Breast epithelium (tissue), 4 donors: ENCODE measurements at regions of chr9 and their contacts with region 1.

Region 1: DNA sequence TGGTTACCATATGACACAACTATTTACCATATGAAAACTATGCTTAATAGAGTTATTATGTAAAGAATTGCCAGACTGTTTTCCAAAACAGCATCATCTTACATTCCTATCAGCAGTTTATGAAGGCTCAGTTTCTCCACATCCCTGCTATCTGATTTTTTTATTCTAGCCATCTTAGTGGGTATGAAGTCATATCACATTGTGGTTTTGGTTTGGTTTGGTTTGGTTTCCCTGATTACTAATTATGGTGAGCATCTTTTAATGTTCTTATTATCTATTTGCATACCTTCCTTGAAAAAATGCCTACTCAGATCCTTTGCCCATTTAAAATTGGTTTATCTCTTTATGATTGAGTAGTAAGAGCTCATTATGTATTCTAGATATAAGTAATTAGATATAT is 199.4 kb upstream of the NFIL3 start:
- DNase-seq: no peak
- H3K4me3 ChIP-seq: no peak overlapping the region
- H3K27ac ChIP-seq: no peak overlapping the region
- H3K4me1 ChIP-seq: no peaks in the 10 kb centered on the region
- H3K27me3 ChIP-seq: no peaks in the 10 kb centered on the region
- CTCF ChIP-seq: no peak
- POLR2A ChIP-seq: no peak

Region 2: GRCh38 chr9:91164724-91165520 is 458.1 kb before region 1 on chr9:
- intact Hi-C with region 1: loop called (anchors 5 kb)
- DNase-seq: peak; percentile 26 to 61
- H3K4me3 ChIP-seq: no peak overlapping the region
- H3K27ac ChIP-seq: no peak overlapping the region
- H3K4me1 ChIP-seq: no peaks in the 10 kb centered on the region
- H3K27me3 ChIP-seq: no peaks in the 10 kb centered on the region
- CTCF ChIP-seq: no peak
- POLR2A ChIP-seq: no peak

Region 3: DNA sequence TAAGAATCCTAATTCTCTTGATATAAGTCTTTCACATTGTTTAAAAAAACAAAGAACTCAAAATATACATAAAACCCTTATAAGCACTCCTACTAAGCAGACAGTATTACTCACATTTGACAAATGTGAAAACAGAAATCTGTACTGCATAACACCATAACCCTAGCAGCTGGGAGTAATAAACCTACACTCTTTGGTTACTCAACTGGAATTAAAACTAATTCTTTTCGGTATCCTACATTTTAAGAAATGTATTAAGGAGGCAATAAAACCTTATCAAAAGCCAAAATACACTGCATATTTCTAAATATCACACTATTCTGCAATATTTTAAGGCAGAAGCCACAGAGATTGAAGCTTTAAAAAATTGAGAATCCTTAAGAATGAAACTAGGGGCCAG is 268.1 kb before region 1 on chr9:
- intact Hi-C with region 1: loop called (anchors 5 kb)
- DNase-seq: no peak
- H3K4me3 ChIP-seq: no peak overlapping the region
- H3K27ac ChIP-seq: no peak overlapping the region
- H3K4me1 ChIP-seq: no peaks in the 10 kb centered on the region
- H3K27me3 ChIP-seq: no peaks in the 10 kb centered on the region
- CTCF ChIP-seq: no peak
- POLR2A ChIP-seq: no peak